ENCODE measurements at regions of chr17 and their contacts with region 1.

Region 1: GRCh38 chr17:44589316-44590071 is 32.2 kb downstream of the FZD2 start:
- DNase-seq: no peak
- H3K4me3 ChIP-seq: no peak overlapping the region
- H3K27ac ChIP-seq: no peak overlapping the region
- H3K4me1 ChIP-seq: peaks cover 12% of the 10 kb centered on the region
- H3K27me3 ChIP-seq: no peaks in the 10 kb centered on the region
- CTCF ChIP-seq: no peak

Region 2: DNA sequence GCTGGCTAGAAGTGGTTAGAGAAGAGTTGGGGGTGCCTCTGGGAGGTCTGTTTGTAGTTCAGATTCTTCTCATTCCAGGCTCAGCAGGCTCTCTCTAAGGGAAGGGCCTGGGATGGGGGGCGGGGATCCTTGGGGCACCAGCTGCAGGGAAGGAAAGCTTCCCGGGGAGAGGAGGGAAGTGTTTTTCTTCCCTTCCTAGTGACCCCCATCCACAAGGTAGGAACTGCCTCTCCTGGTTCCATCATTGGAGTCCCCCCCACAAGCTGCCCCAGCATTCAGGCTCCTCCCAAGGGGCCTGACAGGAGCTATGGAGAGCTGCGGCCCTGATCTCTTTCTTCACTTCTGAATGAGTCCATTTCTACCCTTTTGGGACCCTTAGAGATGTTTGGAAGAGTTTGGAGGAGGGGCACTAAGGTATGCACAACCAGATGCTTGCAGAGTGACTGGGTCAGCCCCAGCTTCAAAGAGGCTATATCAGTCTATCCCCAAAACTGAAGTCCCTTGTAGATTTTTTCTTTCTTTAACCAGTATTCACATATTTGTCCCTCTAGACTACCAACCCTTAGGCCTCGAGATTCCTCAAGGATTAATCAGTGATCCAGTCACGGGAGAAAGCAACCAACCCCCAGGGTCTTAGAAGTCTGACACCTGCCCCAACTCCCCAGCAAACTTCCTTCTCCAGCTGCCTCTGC is 46.1 kb before region 1 on chr17:
- dilution Hi-C with region 1: loop called (anchors 5 kb)
- DNase-seq: peak; percentile 66
- H3K4me3 ChIP-seq: peak overlapping the region in 1 of 3 experiments; percentile 41
- H3K27ac ChIP-seq: peak overlapping the region; percentile 61
- H3K4me1 ChIP-seq: peaks cover 50% of the 10 kb centered on the region
- H3K27me3 ChIP-seq: no peaks in the 10 kb centered on the region
- CTCF ChIP-seq: no peak